ENCODE measurements at regions of chr7 and their contacts with region 1.

Region 1: DNA sequence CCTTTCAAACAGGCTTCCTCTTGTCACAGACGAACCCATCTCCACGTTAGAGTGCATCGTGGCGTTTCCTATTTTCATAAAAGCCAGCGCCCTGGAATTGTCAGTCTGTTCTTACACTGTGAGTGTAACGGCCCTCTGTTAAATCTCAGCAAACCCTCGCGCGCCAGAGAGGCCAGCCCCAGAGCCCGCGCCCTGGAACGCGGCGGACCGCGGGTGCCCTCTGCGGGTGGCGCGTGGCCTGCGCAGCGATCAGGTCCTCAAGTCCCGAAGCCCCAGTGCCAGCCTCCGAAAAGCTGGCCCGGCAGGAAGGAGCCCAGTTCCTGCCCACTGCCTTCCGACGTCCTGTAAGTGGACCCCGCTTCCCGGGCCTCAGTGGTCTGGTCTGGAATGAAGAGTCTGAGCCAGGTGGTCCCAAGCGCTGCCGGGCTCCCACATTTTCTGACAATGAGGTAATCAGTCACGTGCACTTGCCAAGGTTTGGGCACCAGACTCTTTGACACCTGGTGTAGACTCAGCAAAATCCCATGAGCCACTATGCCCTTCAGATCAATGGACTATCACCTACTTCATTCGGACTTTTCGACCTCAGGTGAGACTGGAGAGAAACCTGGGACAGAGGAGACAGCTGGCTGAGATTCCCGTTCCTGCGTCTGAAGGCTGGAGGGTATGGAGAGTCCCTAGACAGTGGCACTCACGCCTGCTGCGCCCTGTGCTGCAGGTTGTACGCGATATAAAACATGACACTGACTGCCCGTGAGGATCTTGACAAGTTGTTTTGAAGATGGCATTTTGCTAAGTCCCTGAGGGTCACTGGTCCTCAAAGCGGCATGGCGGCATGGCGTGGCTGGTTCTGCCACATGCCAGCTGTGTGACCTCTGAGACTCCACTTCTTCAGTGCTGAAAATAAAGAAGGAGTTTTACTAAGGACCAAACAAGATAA is 109.4 kb upstream of the LANCL2 start:
- DNase-seq: peak; percentile 86 to 95
- ATAC-seq: peak; percentile 94
- H3K4me3 ChIP-seq: peak overlapping the region; percentile 19 to 21
- H3K27ac ChIP-seq: no peak overlapping the region
- H3K4me1 ChIP-seq: no peaks in the 10 kb centered on the region
- H3K27me3 ChIP-seq: no peaks in the 10 kb centered on the region

Region 2: DNA sequence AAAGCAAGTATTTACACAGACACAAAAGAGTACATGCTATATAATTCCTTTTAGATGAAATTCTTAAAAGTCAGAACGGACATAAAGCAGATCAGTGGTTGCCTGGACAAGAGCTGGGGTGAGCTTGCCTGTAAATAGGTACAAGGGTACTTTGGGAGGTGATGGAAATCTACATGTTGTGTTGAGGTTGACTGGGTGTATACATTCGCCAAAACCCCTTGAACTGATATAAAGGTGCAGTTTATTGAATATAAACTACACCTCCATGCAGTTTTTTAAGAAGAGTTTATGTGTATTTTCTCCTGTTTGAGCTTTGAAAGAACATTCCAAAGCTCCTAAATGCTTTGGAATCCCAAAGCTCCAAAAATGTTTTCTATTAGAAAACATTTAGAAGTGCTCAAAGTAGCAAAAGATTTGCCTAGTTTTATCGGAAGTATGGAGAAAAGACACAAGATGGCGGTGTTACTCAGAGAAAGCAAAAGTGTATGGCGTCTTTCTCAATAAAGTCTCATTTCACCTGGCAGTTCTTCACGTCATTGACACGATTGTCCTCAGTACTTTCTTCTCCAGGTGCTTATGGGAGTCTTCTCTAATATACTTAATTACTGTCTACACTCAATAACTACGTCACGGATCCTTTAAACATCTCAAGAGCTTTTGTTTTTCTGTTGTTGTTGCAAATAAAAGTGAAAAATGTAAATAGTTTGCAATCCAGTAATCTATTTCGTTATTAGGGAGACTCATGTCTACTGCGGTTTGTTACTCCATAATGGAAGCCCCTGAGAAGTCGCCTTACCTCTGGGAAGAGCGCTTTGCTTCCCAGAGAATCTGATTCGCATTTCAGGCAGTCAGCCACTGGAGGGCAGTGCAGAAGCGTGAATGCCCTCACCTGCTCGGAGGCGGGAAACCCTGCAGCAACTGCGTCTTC is 482.0 kb before region 1 on chr7:
- intact Hi-C with region 1: loop called (anchors 1 to 2 kb)
- DNase-seq: peak; percentile 79 to 93
- ATAC-seq: peak; percentile 94
- H3K4me3 ChIP-seq: peak overlapping the region in 1 of 2 donors; percentile 64
- H3K27ac ChIP-seq: no peak overlapping the region
- H3K4me1 ChIP-seq: no peaks in the 10 kb centered on the region
- H3K27me3 ChIP-seq: no peaks in the 10 kb centered on the region

Region 3: GRCh38 chr7:54788664-54789063 is 467.1 kb before region 1 on chr7:
- intact Hi-C with region 1: loop called in 1 of 2 experiments (anchors 1 kb)
- DNase-seq: no peak
- ATAC-seq: peak; percentile 66
- H3K4me3 ChIP-seq: no peak overlapping the region
- H3K27ac ChIP-seq: no peak overlapping the region
- H3K4me1 ChIP-seq: no peaks in the 10 kb centered on the region
- H3K27me3 ChIP-seq: no peaks in the 10 kb centered on the region

Region 4: DNA sequence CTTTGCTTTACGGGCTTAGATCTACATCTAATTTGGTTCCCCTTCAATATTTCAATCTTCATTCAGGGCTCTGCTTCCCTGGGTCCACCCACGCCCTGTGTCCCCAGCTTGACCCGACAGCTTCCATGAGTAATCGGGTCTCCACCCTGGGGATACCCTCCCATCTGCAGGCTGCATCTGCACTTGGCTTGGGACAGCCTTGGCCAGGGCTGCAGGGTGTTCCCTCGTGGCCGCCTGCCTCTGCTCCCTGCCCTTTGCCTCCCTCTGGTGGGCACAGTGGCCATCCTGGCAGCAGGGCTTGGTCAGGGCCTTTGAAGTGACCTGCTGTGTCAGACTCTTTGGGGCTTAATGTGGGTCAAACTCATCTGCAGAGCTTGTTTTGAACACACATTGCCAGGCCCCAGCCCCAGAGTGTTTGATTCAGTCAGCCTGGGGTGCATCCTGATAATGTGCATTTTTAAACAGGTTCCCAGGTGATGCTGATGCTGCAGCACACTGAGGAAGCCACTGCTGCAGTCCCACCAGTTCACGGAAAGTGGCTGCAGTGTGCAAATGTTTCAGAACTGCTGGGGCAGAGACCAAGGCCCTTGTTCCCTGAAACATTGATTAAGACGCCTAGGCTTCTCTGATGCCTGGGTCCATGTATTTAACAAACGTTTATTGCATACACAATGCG is 416.1 kb before region 1 on chr7:
- intact Hi-C with region 1: loop called (anchors 2 to 5 kb)
- DNase-seq: peak; percentile 85 to 90
- ATAC-seq: peak; percentile 82
- H3K4me3 ChIP-seq: no peak overlapping the region
- H3K27ac ChIP-seq: no peak overlapping the region
- H3K4me1 ChIP-seq: peaks cover 4 to 5% of the 10 kb centered on the region in 2 donors
- H3K27me3 ChIP-seq: no peaks in the 10 kb centered on the region

Region 5: DNA sequence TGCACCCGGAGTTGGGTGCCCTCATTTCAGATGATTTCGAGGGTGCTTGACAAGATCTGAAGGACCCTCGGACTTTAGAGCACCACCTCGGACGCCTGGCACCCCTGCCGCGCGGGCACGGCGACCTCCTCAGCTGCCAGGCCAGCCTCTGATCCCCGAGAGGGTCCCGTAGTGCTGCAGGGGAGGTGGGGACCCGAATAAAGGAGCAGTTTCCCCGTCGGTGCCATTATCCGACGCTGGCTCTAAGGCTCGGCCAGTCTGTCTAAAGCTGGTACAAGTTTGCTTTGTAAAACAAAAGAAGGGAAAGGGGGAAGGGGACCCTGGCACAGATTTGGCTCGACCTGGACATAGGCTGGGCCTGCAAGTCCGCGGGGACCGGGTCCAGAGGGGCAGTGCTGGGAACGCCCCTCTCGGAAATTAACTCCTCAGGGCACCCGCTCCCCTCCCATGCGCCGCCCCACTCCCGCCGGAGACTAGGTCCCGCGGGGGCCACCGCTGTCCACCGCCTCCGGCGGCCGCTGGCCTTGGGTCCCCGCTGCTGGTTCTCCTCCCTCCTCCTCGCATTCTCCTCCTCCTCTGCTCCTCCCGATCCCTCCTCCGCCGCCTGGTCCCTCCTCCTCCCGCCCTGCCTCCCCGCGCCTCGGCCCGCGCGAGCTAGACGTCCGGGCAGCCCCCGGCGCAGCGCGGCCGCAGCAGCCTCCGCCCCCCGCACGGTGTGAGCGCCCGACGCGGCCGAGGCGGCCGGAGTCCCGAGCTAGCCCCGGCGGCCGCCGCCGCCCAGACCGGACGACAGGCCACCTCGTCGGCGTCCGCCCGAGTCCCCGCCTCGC is 237.2 kb before region 1 on chr7 and contains the start of gene EGFR:
- intact Hi-C with region 1: loop called in 1 of 2 experiments (anchors 10 kb)
- DNase-seq: peak; percentile 88 to 94
- ATAC-seq: peak; percentile 91
- H3K4me3 ChIP-seq: peak within 1 kb of the TSS; percentile 84 to 88
- H3K27ac ChIP-seq: peak within 1 kb of the TSS; percentile 15 to 91
- H3K4me1 ChIP-seq: no peaks in the 10 kb centered on the region
- H3K27me3 ChIP-seq: no peaks in the 10 kb centered on the region
- total RNA-seq, gene EGFR: 70.5 to 72.4 TPM

Region 6: DNA sequence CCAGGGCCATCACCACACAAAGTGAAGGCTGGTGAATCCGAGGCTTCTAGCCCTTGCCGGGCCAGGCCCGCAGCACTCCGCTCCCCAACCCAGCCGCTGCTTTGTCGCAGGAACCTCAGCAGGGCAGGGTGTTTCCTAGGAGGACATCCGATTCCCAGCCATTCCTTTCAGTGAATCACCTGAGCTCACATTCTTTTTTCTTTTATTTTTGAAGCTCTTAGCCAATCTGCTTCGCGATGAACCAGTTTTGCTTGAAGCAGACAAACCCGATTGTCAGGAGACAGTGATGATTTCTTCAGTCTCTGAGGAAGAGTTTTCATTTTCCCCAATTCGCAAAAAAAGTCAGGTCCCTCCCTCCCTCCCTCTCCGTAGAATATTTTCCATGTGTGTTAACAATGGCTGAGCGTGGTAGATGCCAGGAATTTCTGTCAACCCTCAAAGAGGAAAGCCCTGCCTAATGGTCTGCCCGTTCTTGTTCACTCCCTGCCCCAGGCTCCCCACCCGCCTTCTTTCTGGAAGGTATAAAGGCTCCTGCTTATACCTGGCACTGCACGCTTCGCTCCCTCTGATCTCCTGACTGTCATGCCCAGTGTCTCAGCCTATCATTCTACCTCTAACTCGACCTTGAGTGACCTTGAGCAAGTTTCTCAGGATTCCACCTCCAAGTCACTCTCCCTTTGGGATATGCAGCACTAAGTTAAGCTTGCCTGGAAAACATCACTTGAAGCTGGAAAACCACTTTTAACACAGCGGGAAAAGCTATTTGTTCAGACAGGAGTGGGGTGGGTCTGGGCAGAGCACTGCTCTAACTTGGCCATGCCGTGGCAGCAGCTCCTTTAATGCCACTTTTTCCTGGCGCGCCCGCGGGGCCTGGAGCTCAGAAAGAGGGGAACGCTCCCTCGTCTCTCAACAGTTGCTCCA is 201.9 kb before region 1 on chr7:
- intact Hi-C with region 1: loop called in 1 of 2 experiments (anchors 10 kb)
- DNase-seq: peak; percentile 58 to 73
- ATAC-seq: peak; percentile 27
- H3K4me3 ChIP-seq: no peak overlapping the region
- H3K27ac ChIP-seq: peak overlapping the region; percentile 29 to 73
- H3K4me1 ChIP-seq: peaks cover 0 to 8% of the 10 kb centered on the region in 2 donors
- H3K27me3 ChIP-seq: no peaks in the 10 kb centered on the region

Region 7: GRCh38 chr7:55086413-55087201 is 169.2 kb before region 1 on chr7:
- intact Hi-C with region 1: no loop called
- DNase-seq: peak in 1 of 2 donors; percentile 74
- ATAC-seq: peak; percentile 71
- H3K4me3 ChIP-seq: no peak overlapping the region
- H3K27ac ChIP-seq: peak overlapping the region; percentile 37 to 76
- H3K4me1 ChIP-seq: peaks cover 3 to 6% of the 10 kb centered on the region in 2 donors
- H3K27me3 ChIP-seq: no peaks in the 10 kb centered on the region

Region 8: GRCh38 chr7:55109381-55110167 is 146.2 kb before region 1 on chr7:
- intact Hi-C with region 1: no loop called
- DNase-seq: no peak
- ATAC-seq: no peak
- H3K4me3 ChIP-seq: no peak overlapping the region
- H3K27ac ChIP-seq: no peak overlapping the region
- H3K4me1 ChIP-seq: peaks cover 0 to 4% of the 10 kb centered on the region in 2 donors
- H3K27me3 ChIP-seq: no peaks in the 10 kb centered on the region

Region 9: DNA sequence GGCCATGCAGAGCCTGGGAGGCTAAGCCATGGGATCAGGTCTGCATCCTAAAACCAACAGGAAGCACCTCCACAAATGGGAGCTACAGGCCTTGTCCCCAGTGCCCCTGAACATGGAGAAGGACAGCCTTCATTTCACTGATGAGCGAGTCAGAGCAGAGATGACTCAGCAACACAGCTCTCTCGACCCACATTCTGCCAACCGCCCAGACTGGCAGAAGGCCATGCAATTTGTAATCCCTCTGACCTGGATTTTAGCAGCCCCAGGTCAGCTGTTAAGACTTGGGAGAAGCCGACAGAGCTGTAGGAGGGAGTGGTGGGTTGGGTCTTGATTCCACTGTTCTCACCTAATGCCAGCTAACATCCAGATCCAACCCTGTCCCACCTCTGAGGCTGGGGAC is 291.1 kb after region 1 on chr7:
- intact Hi-C with region 1: no loop called
- DNase-seq: peak; percentile 87 to 91
- ATAC-seq: peak; percentile 84
- H3K4me3 ChIP-seq: no peak overlapping the region
- H3K27ac ChIP-seq: no peak overlapping the region
- H3K4me1 ChIP-seq: peaks cover 0 to 11% of the 10 kb centered on the region in 2 donors
- H3K27me3 ChIP-seq: no peaks in the 10 kb centered on the region

Measured in aorta (tissue), 5 donors.